ENCODE measurements at regions of chr18 and their contacts with region 1.

Region 1: DNA sequence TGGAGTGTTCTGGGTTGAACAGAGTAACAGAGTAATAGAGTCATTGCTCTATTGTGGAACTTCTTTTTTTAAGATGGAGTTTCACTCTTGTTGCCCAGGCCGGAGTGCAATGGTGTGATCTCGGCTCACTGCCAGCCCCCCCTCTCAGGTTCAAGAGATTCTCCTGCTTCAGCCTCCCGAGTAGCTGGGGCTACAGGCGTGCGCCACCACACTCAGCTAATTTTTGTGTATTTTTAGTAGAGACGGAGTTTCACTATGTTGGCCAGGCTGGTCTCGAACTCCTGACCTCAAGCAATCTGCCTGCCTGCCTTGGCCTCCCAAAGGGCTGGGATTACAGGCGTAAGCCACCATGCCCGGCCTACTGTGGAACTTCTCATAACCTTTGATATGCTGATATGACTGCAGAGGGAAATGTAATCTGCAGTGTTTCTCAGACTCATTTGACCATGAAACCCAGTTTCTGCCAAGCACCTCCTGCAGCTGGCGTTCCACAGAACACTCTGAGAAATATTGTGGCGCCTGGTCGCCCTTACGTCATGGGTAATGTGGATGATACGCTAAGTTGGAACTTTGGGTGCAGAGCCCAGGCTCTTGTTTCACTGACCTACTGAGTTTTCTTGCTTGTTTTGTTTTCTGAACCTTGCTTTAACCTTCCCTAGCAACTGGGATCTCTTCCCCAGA is 213.8 kb downstream of the BCL2 start:
- DNase-seq: peak; percentile 31
- H3K4me3 Mint-ChIP-seq: no peak overlapping the region
- H3K27ac Mint-ChIP-seq: no peak overlapping the region
- H3K4me1 Mint-ChIP-seq: peaks cover 33% of the 10 kb centered on the region
- H3K27me3 Mint-ChIP-seq: peaks cover under 1% of the 10 kb centered on the region

Region 2: GRCh38 chr18:63040788-63041410 is 64.9 kb before region 1 on chr18:
- CTCF ChIA-PET with region 1: no interaction called
- POLR2A ChIA-PET with region 1: interaction called, 4 read pairs
- intact Hi-C with region 1: loop called (anchors 2 kb)
- DNase-seq: peak; percentile 20
- H3K4me3 Mint-ChIP-seq: no peak overlapping the region
- H3K27ac Mint-ChIP-seq: peak overlapping the region; percentile 3
- H3K4me1 Mint-ChIP-seq: peaks cover 23% of the 10 kb centered on the region
- H3K27me3 Mint-ChIP-seq: peaks cover 14% of the 10 kb centered on the region

Region 3: GRCh38 chr18:63367053-63367953 is 261.5 kb after region 1 on chr18 and contains the start of gene KDSR:
- CTCF ChIA-PET with region 1: no interaction called
- POLR2A ChIA-PET with region 1: no interaction called
- intact Hi-C with region 1: no loop called
- DNase-seq: peak; percentile 89
- H3K4me3 Mint-ChIP-seq: peak within 1 kb of the TSS; percentile 90
- H3K27ac Mint-ChIP-seq: peak within 1 kb of the TSS; percentile 86
- H3K4me1 Mint-ChIP-seq: peaks cover 29% of the 10 kb centered on the region
- H3K27me3 Mint-ChIP-seq: no peaks in the 10 kb centered on the region
- total RNA-seq, gene KDSR: 72.8 to 77.2 TPM

Region 4: DNA sequence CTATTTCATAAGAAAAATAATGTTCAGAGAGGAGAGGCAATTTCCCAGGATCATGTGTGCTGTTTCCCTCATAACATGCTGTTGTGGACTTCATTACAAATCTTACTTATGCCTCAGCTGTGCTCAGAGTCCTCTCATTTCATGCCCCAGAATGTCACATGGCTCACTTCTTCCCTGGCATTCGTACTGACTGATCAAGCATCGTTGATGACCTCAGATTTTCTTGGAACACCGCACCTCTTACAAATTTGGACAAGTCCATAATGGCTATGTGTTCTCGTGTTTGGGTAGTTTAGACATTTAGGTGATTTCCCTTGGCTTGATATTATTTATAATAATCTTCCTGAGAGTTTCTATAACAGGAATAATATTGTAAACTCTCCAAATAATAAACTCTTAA is 702.3 kb after region 1 on chr18:
- CTCF ChIA-PET with region 1: no interaction called
- POLR2A ChIA-PET with region 1: no interaction called
- intact Hi-C with region 1: no loop called
- DNase-seq: no peak
- H3K4me3 Mint-ChIP-seq: no peak overlapping the region
- H3K27ac Mint-ChIP-seq: no peak overlapping the region
- H3K4me1 Mint-ChIP-seq: no peaks in the 10 kb centered on the region
- H3K27me3 Mint-ChIP-seq: peaks cover 1% of the 10 kb centered on the region